Activated CD8-positive, alpha-beta memory T cell treated with anti-CD3 and anti-CD28 coated beads, Interleukin-2, amount 10 ng/mL, durations not matched to agents 7 days and 5 days (primary cell): ENCODE measurements at regions of chr2 and their contacts with region 1.

Region 1: DNA sequence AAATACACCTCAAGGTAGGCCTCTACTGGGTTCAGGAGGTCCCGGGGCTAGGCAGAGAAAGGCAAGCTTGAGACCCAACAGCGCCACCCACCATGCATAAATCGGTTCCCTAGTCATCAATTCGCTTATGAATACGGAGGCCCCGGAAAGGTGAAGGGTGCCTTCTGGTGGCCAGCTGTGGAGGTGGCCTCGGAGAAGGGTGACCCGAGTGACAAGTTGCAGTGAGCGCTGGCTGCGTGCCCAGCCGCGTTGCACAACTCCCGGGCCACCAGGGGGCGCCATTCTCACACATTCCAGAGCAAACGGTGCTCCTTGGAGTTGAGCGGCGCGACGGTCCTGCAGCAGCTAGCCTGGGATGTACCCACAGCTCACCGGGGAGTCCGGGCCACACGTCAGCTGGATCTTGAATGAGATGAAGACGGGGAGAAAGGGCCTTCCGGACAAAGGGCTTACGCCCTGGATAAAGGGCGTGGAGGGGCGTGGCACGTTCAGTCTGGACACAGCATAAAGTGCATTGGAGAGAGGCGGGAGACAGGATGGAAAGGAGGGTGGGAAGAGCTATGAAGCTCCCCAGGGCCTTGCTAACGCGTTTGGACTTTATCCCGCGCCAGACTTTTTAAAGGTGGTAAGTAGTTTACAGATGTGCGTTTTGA is 20.4 kb downstream of the TMSB10 start:
- DNase-seq: peak; percentile 99
- ATAC-seq: peak; percentile 87
- H3K4me3 Mint-ChIP-seq: peak overlapping the region; percentile 85
- H3K27ac Mint-ChIP-seq: peak overlapping the region; percentile 84
- H3K4me1 Mint-ChIP-seq: peaks cover 40% of the 10 kb centered on the region
- H3K27me3 Mint-ChIP-seq: no peaks in the 10 kb centered on the region

Region 2: GRCh38 chr2:84858123-84858522 is 67.7 kb before region 1 on chr2:
- CTCF ChIA-PET with region 1: interaction called, 13 read pairs
- DNase-seq: no peak
- ATAC-seq: no peak
- H3K4me3 Mint-ChIP-seq: no peak overlapping the region
- H3K27ac Mint-ChIP-seq: no peak overlapping the region
- H3K4me1 Mint-ChIP-seq: peaks cover 57% of the 10 kb centered on the region
- H3K27me3 Mint-ChIP-seq: no peaks in the 10 kb centered on the region

Region 3: GRCh38 chr2:84881581-84882414 is 44.1 kb before region 1 on chr2:
- CTCF ChIA-PET with region 1: interaction called, 143 read pairs
- DNase-seq: peak; percentile 94
- ATAC-seq: peak; percentile 77
- H3K4me3 Mint-ChIP-seq: peak overlapping the region; percentile 92
- H3K27ac Mint-ChIP-seq: peak overlapping the region; percentile 89
- H3K4me1 Mint-ChIP-seq: peaks cover 46% of the 10 kb centered on the region
- H3K27me3 Mint-ChIP-seq: no peaks in the 10 kb centered on the region

Region 4: DNA sequence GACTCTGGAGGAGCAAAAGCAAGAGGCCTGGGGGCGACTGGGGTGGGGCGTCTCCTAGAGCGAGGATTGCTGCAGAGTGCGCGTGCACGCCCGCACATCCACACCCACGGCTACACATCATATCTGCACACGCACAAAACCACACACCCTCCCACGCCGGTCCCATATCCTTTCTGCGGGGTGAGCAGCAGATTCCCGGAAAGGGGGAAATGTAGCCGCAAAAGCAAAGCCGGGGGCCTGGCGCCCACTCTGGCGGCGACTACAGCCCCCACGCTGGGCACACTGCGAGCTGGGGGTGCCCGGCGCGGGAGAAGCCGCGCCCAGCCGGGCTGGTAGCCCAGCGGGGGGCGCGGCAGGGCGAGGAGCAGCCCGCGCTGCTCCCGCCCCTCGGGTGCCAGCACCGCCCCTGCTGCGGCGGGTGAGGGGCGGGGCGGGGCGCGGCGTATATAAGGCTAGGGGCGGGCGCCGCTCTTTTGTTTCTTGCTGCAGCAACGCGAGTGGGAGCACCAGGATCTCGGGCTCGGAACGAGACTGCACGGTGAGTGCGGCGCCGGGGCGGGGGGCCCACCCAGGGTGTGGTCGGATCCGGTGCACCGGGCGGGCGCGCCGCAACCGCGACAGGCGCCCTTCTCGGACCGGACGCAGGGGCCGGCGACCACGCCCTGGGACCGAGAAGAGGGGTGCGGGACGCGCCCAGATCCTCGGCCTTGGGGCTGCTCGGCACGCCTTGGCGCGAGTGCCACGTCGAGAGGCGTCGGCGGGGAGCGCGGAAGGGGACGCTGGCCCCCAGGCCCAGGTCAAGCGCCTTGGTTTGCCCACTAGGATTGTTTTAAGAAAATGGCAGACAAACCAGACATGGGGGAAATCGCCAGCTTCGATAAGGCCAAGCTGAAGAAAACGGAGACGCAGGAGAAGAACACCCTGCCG is 20.4 kb before region 1 on chr2 and contains the start of gene TMSB10:
- CTCF ChIA-PET with region 1: interaction called, 116 read pairs
- DNase-seq: peak; percentile 91
- ATAC-seq: peak; percentile 73
- H3K4me3 Mint-ChIP-seq: peak within 1 kb of the TSS; percentile 85
- H3K27ac Mint-ChIP-seq: peak within 1 kb of the TSS; percentile 91
- H3K4me1 Mint-ChIP-seq: peaks cover 72% of the 10 kb centered on the region
- H3K27me3 Mint-ChIP-seq: no peaks in the 10 kb centered on the region
- total RNA-seq, gene TMSB10: 3,578 to 3,807 TPM

Region 5: DNA sequence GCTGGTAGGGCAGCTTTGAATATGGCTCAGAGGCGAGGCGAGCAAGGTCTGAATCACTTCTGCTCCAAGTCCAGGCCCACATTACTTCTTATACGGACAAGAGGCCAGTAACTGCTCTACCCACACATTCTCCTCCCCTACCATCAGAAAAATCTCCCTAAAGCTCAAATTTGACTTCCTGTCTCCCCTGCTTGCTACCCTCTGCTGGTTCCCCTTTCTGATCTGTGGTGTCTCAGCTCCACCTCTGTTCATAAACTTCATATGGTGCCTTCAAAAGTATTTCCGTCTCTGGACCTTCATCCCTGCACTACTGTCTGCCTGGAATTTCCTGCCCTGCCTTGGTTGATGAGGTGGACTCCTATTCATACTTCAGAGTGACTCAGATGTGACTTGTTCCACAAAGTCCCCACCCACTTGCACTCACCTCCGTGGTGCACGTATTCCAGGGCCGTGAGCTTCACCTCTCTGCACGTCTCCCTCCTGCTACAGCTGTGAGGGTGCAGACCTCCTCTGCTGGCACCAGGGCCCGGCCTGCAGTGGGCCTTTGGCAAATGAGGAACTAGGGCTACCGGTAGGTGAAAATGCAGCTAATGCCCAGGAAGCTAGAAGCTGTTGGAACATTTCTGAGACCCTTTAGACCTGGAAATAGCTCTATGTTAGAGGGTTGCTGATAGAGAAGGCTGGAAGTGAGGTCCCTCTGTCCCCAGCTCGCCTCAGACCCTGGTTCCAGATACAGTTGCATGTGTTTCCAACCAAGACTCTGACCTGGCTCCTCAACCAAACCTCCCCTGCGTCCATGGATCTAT is 20.6 kb after region 1 on chr2:
- CTCF ChIA-PET with region 1: interaction called, 121 read pairs
- DNase-seq: peak; percentile 82
- ATAC-seq: peak; percentile 94
- H3K4me3 Mint-ChIP-seq: peak overlapping the region; percentile 45
- H3K27ac Mint-ChIP-seq: peak overlapping the region; percentile 92
- H3K4me1 Mint-ChIP-seq: peaks cover 32% of the 10 kb centered on the region
- H3K27me3 Mint-ChIP-seq: no peaks in the 10 kb centered on the region

Region 6: GRCh38 chr2:85302121-85302520 is 376.3 kb after region 1 on chr2:
- CTCF ChIA-PET with region 1: interaction called, 14 read pairs
- DNase-seq: no peak
- ATAC-seq: no peak
- H3K4me3 Mint-ChIP-seq: no peak overlapping the region
- H3K27ac Mint-ChIP-seq: no peak overlapping the region
- H3K4me1 Mint-ChIP-seq: peaks cover 7% of the 10 kb centered on the region
- H3K27me3 Mint-ChIP-seq: peaks cover 29% of the 10 kb centered on the region